A673 (cell line): ENCODE measurements at regions of chr11 and their contacts with region 1.

Region 1: DNA sequence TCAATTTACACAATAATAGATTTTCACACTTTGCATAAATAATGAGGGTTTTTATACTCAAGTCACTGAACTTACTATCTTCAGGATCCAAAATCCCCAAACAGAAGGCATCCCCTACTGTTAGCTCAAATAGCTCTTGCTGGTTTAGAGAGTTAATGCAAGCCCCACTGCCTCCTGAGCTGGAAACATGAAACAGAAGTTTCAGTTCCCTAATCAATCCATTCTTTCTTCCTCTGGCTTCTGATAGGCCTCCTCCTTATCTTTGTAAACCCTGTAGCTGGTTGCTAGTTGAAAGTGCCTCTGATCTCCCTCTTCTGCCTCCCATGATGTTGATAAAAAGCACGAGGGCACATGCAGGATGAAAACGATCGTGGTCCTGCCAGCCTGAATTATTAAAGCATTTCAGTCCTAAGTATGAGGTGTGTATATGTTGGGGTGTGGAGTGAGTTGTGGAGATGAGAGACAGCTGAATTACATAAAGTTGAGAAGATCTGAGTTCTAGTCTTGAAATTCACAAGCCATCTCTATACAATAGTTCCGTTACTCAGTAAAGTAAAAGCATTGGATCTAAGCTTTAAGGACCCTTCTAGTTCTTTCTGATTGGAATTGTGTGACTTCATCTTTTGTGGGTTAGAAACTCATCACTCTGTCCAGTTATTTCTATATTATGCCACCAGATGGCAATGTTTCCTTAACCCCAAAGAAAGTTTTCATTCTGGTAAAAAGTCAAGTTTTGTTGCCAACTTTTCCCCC is 35.0 kb upstream of the EHF start:
- DNase-seq: peak; percentile 86
- H3K4me3 ChIP-seq: no peak overlapping the region
- H3K27ac ChIP-seq: no peak overlapping the region
- H3K4me1 ChIP-seq: peaks cover 3% of the 10 kb centered on the region
- H3K27me3 ChIP-seq: peaks cover 39% of the 10 kb centered on the region
- CTCF ChIP-seq: peak; percentile 94

Region 2: GRCh38 chr11:34890812-34891211 is 304.9 kb after region 1 on chr11:
- CTCF ChIA-PET with region 1: no interaction called
- POLR2A ChIA-PET with region 1: no interaction called
- intact Hi-C with region 1: loop called (anchors 2 kb)
- DNase-seq: peak; percentile 67
- H3K4me3 ChIP-seq: no peak overlapping the region
- H3K27ac ChIP-seq: no peak overlapping the region
- H3K4me1 ChIP-seq: no peaks in the 10 kb centered on the region
- H3K27me3 ChIP-seq: no peaks in the 10 kb centered on the region
- CTCF ChIP-seq: peak; percentile 74

Region 3: DNA sequence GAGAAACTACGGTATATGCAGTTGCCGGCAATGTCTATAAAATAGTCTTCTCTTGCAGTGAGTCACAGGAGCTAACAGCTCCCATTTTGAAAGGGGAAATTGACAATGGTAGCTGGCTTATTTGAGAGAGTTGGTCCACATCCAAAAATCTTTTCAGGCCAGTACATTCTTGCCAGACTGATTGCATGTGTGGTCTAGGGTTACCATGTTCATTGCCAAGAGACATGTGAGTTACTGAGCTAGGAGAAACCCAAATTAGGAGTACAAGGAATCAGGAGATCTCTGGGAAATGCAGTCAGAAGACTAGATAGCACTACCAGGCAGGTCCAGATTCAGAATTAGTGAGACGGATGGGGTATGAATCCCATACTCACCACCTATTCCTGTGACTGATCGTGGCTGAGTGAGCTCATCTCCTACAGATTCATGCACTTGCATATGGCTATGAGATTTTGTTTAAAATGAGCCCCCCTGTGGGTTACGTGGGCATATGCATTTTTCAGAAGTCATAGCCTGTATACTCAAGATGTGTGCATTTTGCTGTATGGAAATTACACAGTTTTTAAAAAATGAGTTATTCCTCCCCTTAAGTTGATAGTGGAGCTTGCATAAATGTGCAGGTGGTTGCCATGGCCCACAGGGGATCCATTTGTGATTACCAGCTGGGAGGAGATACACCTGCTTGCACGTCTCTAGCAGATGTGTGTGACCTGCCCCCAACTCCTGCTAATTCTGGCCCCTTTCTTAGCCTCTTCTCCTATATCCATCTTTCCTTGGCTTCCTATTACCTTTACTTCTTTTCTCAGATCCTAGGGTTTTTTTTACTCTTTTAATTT is 1600.6 kb after region 1 on chr11:
- CTCF ChIA-PET with region 1: no interaction called
- POLR2A ChIA-PET with region 1: interaction called, 16 read pairs
- intact Hi-C with region 1: no loop called
- DNase-seq: peak; percentile 71
- H3K4me3 ChIP-seq: no peak overlapping the region
- H3K27ac ChIP-seq: no peak overlapping the region
- H3K4me1 ChIP-seq: no peaks in the 10 kb centered on the region
- H3K27me3 ChIP-seq: no peaks in the 10 kb centered on the region
- CTCF ChIP-seq: no peak

Region 4: DNA sequence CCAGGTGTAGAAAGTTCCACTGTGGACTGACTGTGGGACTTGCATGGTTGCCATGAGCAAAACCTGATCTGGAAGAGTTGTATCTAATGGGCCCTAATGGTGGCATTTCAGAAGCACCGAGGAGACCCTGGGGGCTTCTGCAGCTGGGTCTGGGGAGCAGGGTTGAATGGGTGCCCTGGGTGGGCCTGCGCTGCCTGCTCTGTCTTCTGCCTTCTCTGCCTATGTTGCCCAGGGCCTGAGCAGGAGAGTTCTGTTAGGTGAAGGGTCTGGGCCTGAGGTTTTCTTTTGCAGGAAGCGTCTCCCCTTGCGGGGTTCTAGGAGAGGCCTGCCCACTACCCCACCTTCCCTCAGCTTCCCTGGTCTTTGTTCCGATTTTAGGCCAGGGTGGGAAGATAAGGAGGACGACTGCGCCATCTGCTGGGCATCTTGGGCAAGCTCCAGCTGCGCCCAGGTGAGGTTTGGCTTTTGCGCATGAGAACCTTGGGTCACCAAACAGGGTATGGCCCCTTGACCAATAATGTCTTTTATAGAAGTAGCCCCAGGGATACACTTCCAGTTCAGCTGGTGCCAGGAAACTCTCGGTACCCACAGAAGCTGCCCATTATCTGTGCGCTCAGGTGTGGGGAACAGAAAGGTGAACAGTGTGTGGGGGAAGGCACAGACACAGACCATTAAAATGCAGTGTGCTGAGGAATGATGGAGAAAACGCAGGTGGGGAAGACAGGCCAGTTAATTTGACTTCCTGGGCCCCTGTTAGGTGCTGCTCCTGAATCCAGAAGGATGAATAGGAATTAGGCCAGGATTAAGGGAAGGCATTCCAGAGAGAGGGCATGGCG is 1680.1 kb after region 1 on chr11:
- CTCF ChIA-PET with region 1: no interaction called
- POLR2A ChIA-PET with region 1: no interaction called
- intact Hi-C with region 1: loop called (anchors 10 kb)
- DNase-seq: peak; percentile 87
- H3K4me3 ChIP-seq: no peak overlapping the region
- H3K27ac ChIP-seq: no peak overlapping the region
- H3K4me1 ChIP-seq: no peaks in the 10 kb centered on the region
- H3K27me3 ChIP-seq: peaks cover 2% of the 10 kb centered on the region
- CTCF ChIP-seq: peak; percentile 100